ENCODE measurements at regions of chr1 and their contacts with region 1.

Region 1: GRCh38 chr1:40014812-40015594 is 25.5 kb upstream of the CAP1 start:
- DNase-seq: peak; percentile 76
- H3K4me3 Mint-ChIP-seq: no peak overlapping the region
- H3K27ac Mint-ChIP-seq: peak overlapping the region; percentile 82
- H3K4me1 Mint-ChIP-seq: peaks cover 17% of the 10 kb centered on the region
- H3K27me3 Mint-ChIP-seq: no peaks in the 10 kb centered on the region
- CTCF ChIP-seq: no peak

Region 2: GRCh38 chr1:39816415-39817090 is 198.4 kb before region 1 on chr1:
- CTCF ChIA-PET with region 1: no interaction called
- POLR2A ChIA-PET with region 1: no interaction called
- intact Hi-C with region 1: no loop called
- DNase-seq: peak; percentile 72
- H3K4me3 Mint-ChIP-seq: no peak overlapping the region
- H3K27ac Mint-ChIP-seq: no peak overlapping the region
- H3K4me1 Mint-ChIP-seq: peaks cover 9% of the 10 kb centered on the region
- H3K27me3 Mint-ChIP-seq: no peaks in the 10 kb centered on the region
- CTCF ChIP-seq: peak; percentile 58

Region 3: DNA sequence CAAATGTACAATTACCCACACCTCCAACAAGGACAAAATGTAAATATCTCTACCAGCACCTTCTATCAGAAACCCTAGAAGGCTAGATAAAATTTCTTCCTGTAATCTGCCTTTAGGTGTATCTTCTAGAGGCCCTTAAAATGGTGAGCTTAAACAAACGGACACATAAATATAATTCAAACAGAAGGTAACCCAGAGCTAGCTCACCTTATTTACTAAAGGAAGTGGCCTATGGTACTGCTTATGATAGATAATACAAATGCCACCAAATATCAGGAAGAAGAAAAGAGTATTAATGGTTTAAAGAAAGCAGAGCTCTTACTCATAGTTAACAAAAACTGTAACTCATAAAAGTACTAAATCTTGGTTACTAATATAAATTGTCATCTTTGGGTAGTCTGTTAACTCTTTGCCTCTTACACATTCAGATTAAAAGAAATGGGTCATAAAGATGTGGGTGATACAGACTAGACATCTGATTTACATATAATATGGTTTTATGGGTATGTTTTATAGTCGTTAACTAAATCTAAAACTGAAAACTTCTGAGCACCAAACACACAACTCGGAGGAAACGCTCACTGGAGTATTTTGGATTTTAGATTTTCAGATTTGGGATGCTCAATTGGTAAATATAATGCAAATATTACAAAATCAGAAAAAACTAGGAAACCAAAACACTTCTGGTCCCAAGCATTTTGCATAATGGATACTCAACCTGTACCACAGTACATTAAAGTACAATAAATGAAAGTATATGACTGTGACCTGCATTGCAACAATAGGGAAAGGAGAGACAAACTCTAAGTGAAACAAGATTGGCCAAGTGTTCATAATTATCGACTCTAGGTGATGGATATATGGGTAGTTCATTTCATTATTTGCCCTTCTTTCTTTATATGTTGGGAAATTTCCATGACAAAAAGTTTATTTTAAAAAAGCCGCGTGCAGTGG is 154.9 kb before region 1 on chr1:
- CTCF ChIA-PET with region 1: no interaction called
- POLR2A ChIA-PET with region 1: no interaction called
- intact Hi-C with region 1: no loop called
- DNase-seq: no peak
- H3K4me3 Mint-ChIP-seq: no peak overlapping the region
- H3K27ac Mint-ChIP-seq: no peak overlapping the region
- H3K4me1 Mint-ChIP-seq: peaks cover 6% of the 10 kb centered on the region
- H3K27me3 Mint-ChIP-seq: no peaks in the 10 kb centered on the region
- CTCF ChIP-seq: no peak

Region 4: GRCh38 chr1:39926343-39926793 is 88.6 kb before region 1 on chr1:
- CTCF ChIA-PET with region 1: no interaction called
- POLR2A ChIA-PET with region 1: no interaction called
- intact Hi-C with region 1: no loop called
- DNase-seq: peak; percentile 63
- H3K4me3 Mint-ChIP-seq: peak overlapping the region; percentile 20
- H3K27ac Mint-ChIP-seq: peak overlapping the region; percentile 81
- H3K4me1 Mint-ChIP-seq: peaks cover 49% of the 10 kb centered on the region
- H3K27me3 Mint-ChIP-seq: no peaks in the 10 kb centered on the region
- CTCF ChIP-seq: no peak

Region 5: DNA sequence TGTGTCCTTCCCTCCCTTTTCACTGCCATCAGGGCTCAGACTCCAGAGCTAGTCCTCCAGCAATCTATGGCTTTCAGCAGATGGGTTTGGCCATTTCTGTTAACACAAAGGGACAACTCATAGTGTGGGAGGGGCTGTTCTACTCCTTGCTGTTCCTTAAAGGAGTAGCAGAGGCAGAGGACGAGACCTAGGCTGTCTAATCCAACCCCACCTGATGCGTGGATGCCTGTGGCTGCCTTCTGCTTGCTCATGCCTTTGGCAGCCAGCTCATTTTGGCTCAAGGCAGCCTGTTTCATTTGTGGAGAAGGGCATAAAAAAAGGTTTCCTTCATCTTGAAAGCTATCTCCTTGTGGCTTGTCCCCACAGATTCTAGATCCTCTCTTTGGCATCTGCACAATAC is 33.0 kb before region 1 on chr1:
- CTCF ChIA-PET with region 1: no interaction called
- POLR2A ChIA-PET with region 1: interaction called, 5 read pairs
- intact Hi-C with region 1: loop called (anchors 5 kb)
- DNase-seq: peak; percentile 69
- H3K4me3 Mint-ChIP-seq: peak overlapping the region; percentile 11
- H3K27ac Mint-ChIP-seq: peak overlapping the region; percentile 78
- H3K4me1 Mint-ChIP-seq: peaks cover 26% of the 10 kb centered on the region
- H3K27me3 Mint-ChIP-seq: no peaks in the 10 kb centered on the region
- CTCF ChIP-seq: no peak

Region 6: GRCh38 chr1:40003156-40004148 is 11.6 kb before region 1 on chr1:
- CTCF ChIA-PET with region 1: interaction called, 7 read pairs
- POLR2A ChIA-PET with region 1: interaction called, 14 read pairs
- intact Hi-C with region 1: no loop called
- DNase-seq: no peak
- H3K4me3 Mint-ChIP-seq: no peak overlapping the region
- H3K27ac Mint-ChIP-seq: no peak overlapping the region
- H3K4me1 Mint-ChIP-seq: peaks cover 5% of the 10 kb centered on the region
- H3K27me3 Mint-ChIP-seq: no peaks in the 10 kb centered on the region
- CTCF ChIP-seq: no peak

Region 7: GRCh38 chr1:40449684-40450494 is 434.9 kb after region 1 on chr1 and contains the start of gene ZFP69B:
- CTCF ChIA-PET with region 1: no interaction called
- POLR2A ChIA-PET with region 1: no interaction called
- intact Hi-C with region 1: no loop called
- DNase-seq: peak; percentile 88
- H3K4me3 Mint-ChIP-seq: peak within 1 kb of the TSS; percentile 79
- H3K27ac Mint-ChIP-seq: peak within 1 kb of the TSS; percentile 90
- H3K4me1 Mint-ChIP-seq: peaks cover 12% of the 10 kb centered on the region
- H3K27me3 Mint-ChIP-seq: no peaks in the 10 kb centered on the region
- CTCF ChIP-seq: no peak
- total RNA-seq, gene ZFP69B: 6.0 and 8.9 TPM in 2 replicates

Measured in MCF 10A (cell line).